A673 (cell line): ENCODE measurements at regions of chr3 and their contacts with region 1.

Region 1: DNA sequence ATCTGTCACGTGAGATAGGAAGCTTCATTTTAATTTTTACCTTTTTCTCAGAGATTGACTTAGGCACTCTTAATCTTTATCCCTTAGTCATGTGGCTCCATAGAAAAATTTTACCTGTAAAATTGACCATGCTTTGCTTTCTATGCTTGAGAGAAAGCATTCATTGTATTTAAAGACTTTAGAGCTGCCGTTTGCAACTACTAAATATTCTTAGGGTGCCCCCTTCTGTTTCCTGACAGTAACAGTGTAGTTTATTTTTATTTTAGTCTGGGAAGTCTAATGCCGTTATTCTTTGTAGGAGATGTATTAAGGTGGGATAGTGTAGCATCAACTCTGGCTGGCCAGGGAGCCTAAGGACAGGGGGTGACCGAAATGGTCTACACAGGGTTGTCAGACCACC is 84.5 kb upstream of the SYNPR start:
- DNase-seq: peak; percentile 30
- H3K4me3 ChIP-seq: no peak overlapping the region
- H3K27ac ChIP-seq: no peak overlapping the region
- H3K4me1 ChIP-seq: no peaks in the 10 kb centered on the region
- H3K27me3 ChIP-seq: peaks cover 12% of the 10 kb centered on the region
- CTCF ChIP-seq: peak; percentile 49

Region 2: DNA sequence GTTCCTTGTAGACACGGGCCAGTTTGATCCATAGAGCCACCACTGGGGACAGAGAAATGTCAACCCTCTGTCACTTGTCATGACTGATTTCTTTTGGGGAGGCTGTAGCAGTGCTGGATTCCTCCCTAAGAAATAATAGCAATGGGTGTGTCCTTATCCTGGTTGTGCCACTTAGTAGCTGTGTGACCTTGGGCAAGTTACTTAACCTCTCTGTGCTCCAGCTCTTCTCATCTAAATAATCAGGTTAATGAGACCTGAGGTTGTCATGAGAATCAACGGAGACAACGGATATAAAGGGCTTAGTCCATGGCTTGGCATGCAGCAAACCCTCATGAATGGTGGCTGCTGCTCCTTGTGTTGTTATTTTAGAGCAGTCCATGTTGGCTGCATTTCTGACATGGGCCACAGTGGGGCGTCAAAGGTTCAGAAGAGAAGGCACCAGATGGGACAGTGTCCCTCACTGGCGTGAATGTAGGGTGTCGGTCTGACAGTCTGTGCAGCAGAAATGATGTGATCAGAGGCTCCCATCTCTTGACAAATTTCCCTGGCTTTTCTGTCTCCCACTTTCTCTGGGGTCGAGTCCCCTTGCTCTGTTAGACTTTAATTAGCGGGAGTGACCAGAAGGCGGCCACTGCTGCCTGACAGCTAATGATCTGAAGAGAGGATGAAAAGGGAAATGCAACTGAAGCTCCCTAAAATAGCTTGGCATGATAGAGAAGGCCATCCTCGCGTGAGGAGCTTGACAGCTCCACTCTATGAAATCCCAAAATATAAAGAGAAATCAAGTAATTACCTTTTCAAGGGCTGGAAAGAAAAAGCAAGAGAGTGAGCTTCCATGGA is 527.8 kb before region 1 on chr3:
- CTCF ChIA-PET with region 1: no interaction called
- POLR2A ChIA-PET with region 1: no interaction called
- intact Hi-C with region 1: loop called (anchors 2 kb)
- DNase-seq: peak; percentile 66
- H3K4me3 ChIP-seq: no peak overlapping the region
- H3K27ac ChIP-seq: no peak overlapping the region
- H3K4me1 ChIP-seq: no peaks in the 10 kb centered on the region
- H3K27me3 ChIP-seq: no peaks in the 10 kb centered on the region
- CTCF ChIP-seq: peak; percentile 60

Region 3: DNA sequence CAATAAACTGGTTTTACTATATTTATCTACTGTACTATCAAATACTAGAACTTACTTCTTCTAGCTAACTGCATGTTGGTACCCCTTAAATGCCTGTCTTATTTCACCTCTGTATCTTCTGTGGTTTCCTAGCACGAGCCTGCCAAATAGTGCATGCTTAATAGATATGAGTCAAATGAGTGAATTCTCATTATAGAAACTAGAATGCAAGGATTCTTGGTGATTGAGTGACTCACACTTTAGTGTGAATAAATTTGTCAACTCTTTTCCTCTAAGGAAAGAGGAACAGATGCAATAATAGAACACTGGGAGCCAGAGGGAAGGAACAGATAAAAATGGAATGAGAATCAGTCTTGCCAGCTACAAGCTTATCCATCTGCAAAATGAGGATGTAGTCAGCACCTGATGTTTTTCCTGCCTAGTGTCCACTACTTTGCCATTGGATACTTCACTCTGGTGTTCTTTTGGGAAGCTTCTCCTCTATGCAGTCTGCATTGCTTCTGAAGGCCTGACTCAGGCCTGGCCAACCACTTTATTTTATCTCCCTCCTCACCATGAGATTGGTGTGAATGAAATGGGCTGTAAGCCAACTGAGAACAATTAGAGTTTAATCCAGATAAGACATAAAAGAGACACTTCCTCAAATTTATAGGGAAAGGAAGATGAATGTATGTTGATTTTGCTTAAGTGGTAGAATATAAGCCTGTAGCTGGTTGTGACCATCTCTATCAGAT is 129.3 kb before region 1 on chr3:
- CTCF ChIA-PET with region 1: no interaction called
- POLR2A ChIA-PET with region 1: no interaction called
- intact Hi-C with region 1: no loop called
- DNase-seq: peak; percentile 0
- H3K4me3 ChIP-seq: no peak overlapping the region
- H3K27ac ChIP-seq: no peak overlapping the region
- H3K4me1 ChIP-seq: no peaks in the 10 kb centered on the region
- H3K27me3 ChIP-seq: no peaks in the 10 kb centered on the region
- CTCF ChIP-seq: no peak

Region 4: GRCh38 chr3:63096248-63097058 is 97.2 kb before region 1 on chr3:
- CTCF ChIA-PET with region 1: no interaction called
- POLR2A ChIA-PET with region 1: no interaction called
- intact Hi-C with region 1: no loop called
- DNase-seq: no peak
- H3K4me3 ChIP-seq: no peak overlapping the region
- H3K27ac ChIP-seq: no peak overlapping the region
- H3K4me1 ChIP-seq: no peaks in the 10 kb centered on the region
- H3K27me3 ChIP-seq: peaks cover 6% of the 10 kb centered on the region
- CTCF ChIP-seq: no peak